ENCODE measurements at regions of chr4 and their contacts with region 1.

Region 1: GRCh38 chr4:77819843-77820648 is 878 bp upstream of the CNOT6L start:
- DNase-seq: peak; percentile 93 to 98 (median 96)
- ATAC-seq: peak; percentile 75
- H3K4me3 ChIP-seq: peak overlapping the region; percentile 64 to 69
- H3K4me3 Mint-ChIP-seq: peak overlapping the region; percentile 99
- H3K27ac ChIP-seq: peak overlapping the region; percentile 96 to 98
- H3K27ac Mint-ChIP-seq: peak overlapping the region; percentile 100
- H3K4me1 ChIP-seq: peaks cover 44% of the 10 kb centered on the region
- H3K4me1 Mint-ChIP-seq: peaks cover 60% of the 10 kb centered on the region
- H3K27me3 ChIP-seq: no peaks in the 10 kb centered on the region
- H3K27me3 Mint-ChIP-seq: no peaks in the 10 kb centered on the region
- CTCF ChIP-seq: no peak

Region 2: DNA sequence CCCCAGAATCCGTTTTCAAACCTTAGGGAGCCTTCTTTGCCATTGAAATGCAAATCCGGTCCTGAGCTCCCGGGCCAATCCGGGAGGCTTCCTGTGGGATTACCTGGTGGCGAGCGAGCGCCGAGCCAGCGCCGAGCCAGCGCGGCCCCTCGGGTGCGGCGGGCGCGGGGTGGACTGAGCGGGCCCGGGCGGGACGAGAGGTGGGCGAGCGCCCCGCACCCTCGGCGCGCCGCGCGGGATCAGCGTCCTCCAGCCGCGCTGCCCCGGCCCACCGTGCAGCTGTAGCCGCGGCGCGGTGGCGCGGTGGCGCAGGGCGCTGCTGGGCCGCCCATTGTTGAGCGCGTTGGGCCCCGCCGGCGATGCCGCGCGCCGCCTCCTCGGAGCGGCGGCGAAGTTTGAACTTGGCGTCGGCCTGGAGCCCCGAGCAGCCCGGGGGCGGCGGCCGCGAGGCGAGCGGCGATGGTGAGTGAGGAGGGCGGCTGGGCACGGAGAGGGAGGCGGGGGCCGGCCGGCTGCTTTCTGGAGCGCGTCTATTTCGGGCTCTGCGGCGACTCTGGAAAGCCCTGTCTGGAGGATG is 1130.7 kb before region 1 on chr4:
- CTCF ChIA-PET with region 1: no interaction called
- POLR2A ChIA-PET with region 1: no interaction called
- intact Hi-C with region 1: no loop called
- DNase-seq: peak in 3 of 9 experiments; percentile 10 to 49 (median 26)
- ATAC-seq: no peak
- H3K4me3 ChIP-seq: peak overlapping the region; percentile 15 to 31
- H3K4me3 Mint-ChIP-seq: peak overlapping the region; percentile 72
- H3K27ac ChIP-seq: no peak overlapping the region
- H3K27ac Mint-ChIP-seq: no peak overlapping the region
- H3K4me1 ChIP-seq: peaks cover 18% of the 10 kb centered on the region
- H3K4me1 Mint-ChIP-seq: peaks cover 15% of the 10 kb centered on the region
- H3K27me3 ChIP-seq: peaks cover 3 to 21% of the 10 kb centered on the region in 2 experiments
- H3K27me3 Mint-ChIP-seq: peaks cover 59% of the 10 kb centered on the region
- CTCF ChIP-seq: no peak

Region 3: DNA sequence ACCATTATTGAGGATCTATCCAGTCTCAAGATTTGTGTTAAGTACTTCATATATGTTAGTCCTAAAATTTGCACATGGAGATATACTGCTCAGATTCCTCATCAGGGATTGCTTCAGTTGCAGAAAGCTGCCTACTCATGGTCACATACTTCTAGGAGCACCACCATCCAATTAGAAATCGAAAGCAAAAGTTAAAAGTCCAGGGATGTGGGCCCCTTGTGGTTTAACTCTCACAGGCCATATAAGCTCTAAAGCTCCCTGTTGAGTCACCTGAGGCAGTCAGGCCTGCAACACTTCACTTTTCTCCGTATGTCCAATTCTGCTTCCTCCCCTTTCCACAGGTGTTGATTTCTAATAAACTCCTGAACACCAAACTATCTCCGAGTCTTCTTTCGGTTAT is 85.1 kb before region 1 on chr4:
- CTCF ChIA-PET with region 1: no interaction called
- POLR2A ChIA-PET with region 1: interaction called, 3 read pairs
- intact Hi-C with region 1: loop called in 1 of 2 experiments (anchors 2 kb)
- DNase-seq: peak in 4 of 9 experiments; percentile 5 to 77 (median 42)
- ATAC-seq: peak; percentile 74
- H3K4me3 ChIP-seq: no peak overlapping the region
- H3K4me3 Mint-ChIP-seq: peak overlapping the region; percentile 77
- H3K27ac ChIP-seq: peak overlapping the region in 1 of 2 experiments; percentile 23
- H3K27ac Mint-ChIP-seq: peak overlapping the region; percentile 86
- H3K4me1 ChIP-seq: peaks cover 28% of the 10 kb centered on the region
- H3K4me1 Mint-ChIP-seq: peaks cover 74% of the 10 kb centered on the region
- H3K27me3 ChIP-seq: no peaks in the 10 kb centered on the region
- H3K27me3 Mint-ChIP-seq: no peaks in the 10 kb centered on the region
- CTCF ChIP-seq: no peak

Region 4: DNA sequence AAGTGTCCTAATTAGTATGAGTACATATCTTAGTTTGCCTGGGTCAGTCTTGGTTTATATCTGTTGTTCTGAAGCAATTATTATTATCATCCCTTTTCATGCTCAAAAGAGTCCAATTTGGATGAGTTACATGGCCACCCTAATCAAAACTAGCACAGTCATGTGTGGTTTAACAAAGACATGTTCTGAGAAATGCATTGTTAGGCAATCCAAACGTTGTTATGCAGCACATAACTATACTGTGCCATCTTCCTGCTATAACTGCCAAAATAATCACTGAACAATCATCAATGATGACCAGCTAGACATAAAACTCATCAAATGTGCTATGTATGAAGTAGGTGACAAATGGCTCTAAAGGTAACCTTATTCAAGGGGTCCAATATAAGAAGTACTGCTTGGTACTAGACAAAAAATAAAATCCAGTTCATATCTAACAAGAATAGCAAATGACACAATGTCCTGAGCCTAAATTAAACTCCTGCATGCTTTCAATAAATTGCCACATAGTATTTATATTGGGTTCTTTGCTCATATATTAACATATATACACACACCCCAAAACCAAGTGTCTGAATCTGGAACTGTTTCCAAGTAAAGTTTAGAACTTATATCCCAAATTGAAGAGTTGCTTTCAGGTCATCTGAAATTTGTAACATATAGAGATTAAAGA is 42.8 kb before region 1 on chr4:
- CTCF ChIA-PET with region 1: no interaction called
- POLR2A ChIA-PET with region 1: interaction called, 6 read pairs
- intact Hi-C with region 1: loop called in 1 of 2 experiments (anchors 5 kb)
- DNase-seq: no peak
- ATAC-seq: no peak
- H3K4me3 ChIP-seq: no peak overlapping the region
- H3K4me3 Mint-ChIP-seq: no peak overlapping the region
- H3K27ac ChIP-seq: peak overlapping the region in 1 of 2 experiments; percentile 27
- H3K27ac Mint-ChIP-seq: peak overlapping the region; percentile 5
- H3K4me1 ChIP-seq: peaks cover 52% of the 10 kb centered on the region
- H3K4me1 Mint-ChIP-seq: peaks cover 70% of the 10 kb centered on the region
- H3K27me3 ChIP-seq: no peaks in the 10 kb centered on the region
- H3K27me3 Mint-ChIP-seq: no peaks in the 10 kb centered on the region
- CTCF ChIP-seq: no peak

Region 5: DNA sequence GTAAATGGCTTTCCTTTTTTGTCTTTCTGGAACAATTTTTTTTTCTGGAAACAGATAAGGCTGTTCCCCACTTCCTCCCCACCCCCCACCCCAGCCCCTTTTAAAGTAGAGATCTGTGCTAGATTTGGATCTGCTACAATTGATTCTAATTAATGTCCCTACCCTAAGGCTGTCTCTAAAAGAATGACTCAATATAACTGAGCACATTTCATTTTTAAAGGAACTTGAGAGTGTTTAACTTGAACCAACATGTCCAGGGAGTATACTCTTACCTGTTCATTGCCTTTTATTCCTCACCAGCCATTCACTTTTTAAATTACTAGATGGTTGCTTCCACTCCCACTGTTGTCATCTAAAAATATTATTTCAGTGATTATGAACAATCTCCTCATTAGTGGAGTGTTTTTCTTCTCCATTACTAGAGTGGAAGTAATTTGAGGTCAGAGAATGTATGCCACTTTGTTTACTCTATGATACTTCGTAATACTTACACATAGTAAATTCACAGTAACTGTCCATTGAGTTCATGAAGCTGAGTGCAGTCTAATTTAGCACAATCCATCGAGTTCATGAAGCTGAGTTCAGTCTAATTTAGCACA is 13.2 kb after region 1 on chr4:
- CTCF ChIA-PET with region 1: interaction called, 4 read pairs
- POLR2A ChIA-PET with region 1: interaction called, 5 read pairs
- intact Hi-C with region 1: loop called in 1 of 2 experiments (anchors 2 kb)
- DNase-seq: no peak
- ATAC-seq: no peak
- H3K4me3 ChIP-seq: no peak overlapping the region
- H3K4me3 Mint-ChIP-seq: no peak overlapping the region
- H3K27ac ChIP-seq: no peak overlapping the region
- H3K27ac Mint-ChIP-seq: no peak overlapping the region
- H3K4me1 ChIP-seq: peaks cover 5% of the 10 kb centered on the region
- H3K4me1 Mint-ChIP-seq: peaks cover 18% of the 10 kb centered on the region
- H3K27me3 ChIP-seq: no peaks in the 10 kb centered on the region
- H3K27me3 Mint-ChIP-seq: no peaks in the 10 kb centered on the region
- CTCF ChIP-seq: no peak

Region 6: DNA sequence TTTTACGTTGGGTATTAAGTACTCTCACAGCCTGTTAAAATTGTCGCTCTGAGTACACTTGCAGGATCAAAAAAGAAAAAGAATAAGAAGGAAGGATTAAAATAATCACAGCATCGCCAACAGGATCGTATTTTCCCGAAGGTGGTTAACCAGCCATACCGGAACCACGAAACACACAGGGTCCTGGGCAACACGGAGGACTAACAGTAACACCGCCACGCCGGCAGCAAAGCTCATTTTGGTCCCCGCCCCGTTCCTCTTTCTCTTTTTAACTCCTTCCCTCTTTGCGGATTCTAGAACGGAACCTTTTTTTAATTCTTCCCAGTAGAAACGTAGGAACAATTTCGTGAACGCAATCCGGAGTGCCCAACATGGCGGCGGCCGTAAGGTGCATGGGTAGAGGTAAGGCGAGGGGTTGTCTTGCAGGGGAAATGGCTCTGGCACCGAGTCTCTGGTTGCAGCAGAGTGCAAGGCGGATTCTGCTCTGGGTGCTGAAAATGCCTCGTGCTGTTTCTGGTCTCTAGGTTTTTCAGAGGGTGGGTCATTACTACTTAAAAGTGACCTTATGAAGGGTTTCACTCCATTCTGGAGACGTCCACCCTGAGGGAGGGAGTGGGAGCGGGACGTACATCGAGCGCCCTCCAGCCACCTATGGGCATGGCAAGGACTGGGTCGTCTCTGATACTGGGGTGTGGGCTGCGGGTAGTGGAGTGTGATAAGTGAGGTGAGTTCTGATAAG is 42.6 kb after region 1 on chr4 and contains the start of gene MRPL1:
- CTCF ChIA-PET with region 1: interaction called, 44 read pairs
- POLR2A ChIA-PET with region 1: interaction called, 625 read pairs
- intact Hi-C with region 1: loop called (anchors 1 kb)
- DNase-seq: peak; percentile 77 to 96 (median 88)
- ATAC-seq: peak; percentile 76
- H3K4me3 ChIP-seq: peak within 1 kb of the TSS; percentile 63 to 76
- H3K4me3 Mint-ChIP-seq: peak within 1 kb of the TSS; percentile 94
- H3K27ac ChIP-seq: peak within 1 kb of the TSS; percentile 95 to 98
- H3K27ac Mint-ChIP-seq: peak within 1 kb of the TSS; percentile 99
- H3K4me1 ChIP-seq: peaks cover 26% of the 10 kb centered on the region
- H3K4me1 Mint-ChIP-seq: peaks cover 62% of the 10 kb centered on the region
- H3K27me3 ChIP-seq: no peaks in the 10 kb centered on the region
- H3K27me3 Mint-ChIP-seq: no peaks in the 10 kb centered on the region
- CTCF ChIP-seq: no peak
- total RNA-seq, gene MRPL1: 14.8 to 20.5 TPM

Region 7: DNA sequence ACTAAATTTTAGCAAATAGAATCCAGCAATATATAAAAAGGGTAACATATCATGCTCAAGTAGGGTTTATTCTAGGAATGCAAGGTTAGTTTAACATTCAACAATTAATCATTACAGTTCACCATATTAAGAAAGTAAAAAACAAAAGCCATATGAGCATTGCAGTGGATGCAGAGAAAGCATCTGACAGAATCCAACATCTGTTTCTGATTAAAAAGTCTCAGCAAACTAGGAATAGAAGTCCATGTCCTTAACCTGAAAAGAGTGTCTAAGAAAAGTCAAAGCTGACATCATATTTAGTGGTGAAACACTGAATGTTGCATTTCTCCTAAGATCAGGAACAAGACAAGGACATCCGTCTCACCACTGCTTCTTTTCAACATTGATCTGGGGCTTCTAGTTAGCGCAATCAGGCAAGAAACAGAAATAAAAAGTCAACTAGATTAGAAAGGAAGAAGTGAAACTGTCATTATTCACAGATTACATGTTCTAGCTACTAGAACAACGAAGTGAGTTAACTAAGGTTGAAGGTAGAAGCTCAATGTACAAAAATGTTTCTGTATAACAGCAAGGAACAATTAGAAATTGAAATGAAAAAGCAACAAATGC is 91.9 kb after region 1 on chr4:
- CTCF ChIA-PET with region 1: no interaction called
- POLR2A ChIA-PET with region 1: no interaction called
- intact Hi-C with region 1: no loop called
- DNase-seq: no peak
- ATAC-seq: no peak
- H3K4me3 ChIP-seq: no peak overlapping the region
- H3K4me3 Mint-ChIP-seq: no peak overlapping the region
- H3K27ac ChIP-seq: no peak overlapping the region
- H3K27ac Mint-ChIP-seq: no peak overlapping the region
- H3K4me1 ChIP-seq: no peaks in the 10 kb centered on the region
- H3K4me1 Mint-ChIP-seq: peaks cover under 1% of the 10 kb centered on the region
- H3K27me3 ChIP-seq: no peaks in the 10 kb centered on the region
- H3K27me3 Mint-ChIP-seq: no peaks in the 10 kb centered on the region
- CTCF ChIP-seq: no peak

Region 8: DNA sequence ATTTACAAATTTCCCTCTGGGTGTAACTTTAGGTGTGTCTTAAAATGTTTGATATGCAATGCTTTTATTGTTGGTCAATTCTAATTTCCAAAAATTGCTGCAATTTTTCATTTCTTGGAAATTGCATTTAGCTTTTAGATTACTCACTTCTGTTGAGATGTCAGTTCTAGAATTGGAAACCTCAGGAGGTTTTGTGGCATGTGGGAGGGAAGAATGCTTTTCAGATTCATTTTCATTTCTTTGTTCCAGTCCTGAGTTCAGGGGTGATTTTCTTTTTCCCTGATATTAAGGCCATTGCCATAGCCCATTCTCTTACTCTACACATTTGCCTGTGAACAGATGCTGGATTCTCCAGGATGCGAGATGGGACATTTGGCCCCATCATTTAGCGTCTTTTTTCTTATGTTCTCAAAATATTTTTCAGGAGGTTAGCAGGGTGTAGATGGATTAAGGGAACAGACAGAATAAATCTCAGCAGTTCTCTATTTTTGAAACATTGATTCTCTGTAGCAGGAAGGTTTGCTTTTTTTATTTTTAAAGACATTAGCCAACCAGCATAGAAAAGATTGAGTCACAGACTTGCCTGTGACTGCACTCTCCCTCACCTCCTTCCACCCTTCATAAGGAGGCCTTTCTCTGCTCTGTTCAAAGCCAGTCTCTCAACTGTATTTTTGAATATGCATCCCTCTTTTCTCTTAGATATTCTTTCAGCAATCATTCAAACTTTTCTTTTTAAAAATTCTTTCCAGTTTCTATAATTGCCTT is 493.1 kb after region 1 on chr4:
- CTCF ChIA-PET with region 1: no interaction called
- POLR2A ChIA-PET with region 1: no interaction called
- intact Hi-C with region 1: no loop called
- DNase-seq: no peak
- ATAC-seq: no peak
- H3K4me3 ChIP-seq: no peak overlapping the region
- H3K4me3 Mint-ChIP-seq: no peak overlapping the region
- H3K27ac ChIP-seq: no peak overlapping the region
- H3K27ac Mint-ChIP-seq: no peak overlapping the region
- H3K4me1 ChIP-seq: no peaks in the 10 kb centered on the region
- H3K4me1 Mint-ChIP-seq: no peaks in the 10 kb centered on the region
- H3K27me3 ChIP-seq: no peaks in the 10 kb centered on the region
- H3K27me3 Mint-ChIP-seq: peaks cover 20% of the 10 kb centered on the region
- CTCF ChIP-seq: no peak

Measured in CD8-positive, alpha-beta T cell (primary cell).